Motor neuron (in vitro differentiated cells): ENCODE measurements at regions of chr6 and their contacts with region 1.

Region 1: GRCh38 chr6:7615611-7616383 is 25.8 kb downstream of the SNRNP48 start:
- ATAC-seq: peak in 6 of 8 experiments; percentile 13 to 43 (median 36)
- H3K4me3 ChIP-seq: no peak overlapping the region
- H3K27ac ChIP-seq: no peak overlapping the region
- H3K4me1 ChIP-seq: no peaks in the 10 kb centered on the region

Region 2: GRCh38 chr6:6676910-6677441 is 938.8 kb before region 1 on chr6:
- in situ Hi-C with region 1: loop called in 2 of 9 experiments (anchors 25 kb)
- ATAC-seq: peak; percentile 13 to 65 (median 60)
- H3K4me3 ChIP-seq: no peak overlapping the region
- H3K27ac ChIP-seq: no peak overlapping the region
- H3K4me1 ChIP-seq: peaks cover 24 to 44% of the 10 kb centered on the region in 2 donors

Region 3: GRCh38 chr6:6724539-6725467 is 891.0 kb before region 1 on chr6:
- in situ Hi-C with region 1: loop called in 1 of 9 experiments (anchors 25 kb)
- ATAC-seq: peak; percentile 95 to 99 (median 96)
- H3K4me3 ChIP-seq: no peak overlapping the region
- H3K27ac ChIP-seq: no peak overlapping the region
- H3K4me1 ChIP-seq: peaks cover 17% of the 10 kb centered on the region in 2 donors

Region 4: GRCh38 chr6:7282097-7282906 is 333.5 kb before region 1 on chr6:
- in situ Hi-C with region 1: loop called in 3 of 9 experiments (anchors 10 to 25 kb)
- ATAC-seq: no peak
- H3K4me3 ChIP-seq: no peak overlapping the region
- H3K27ac ChIP-seq: no peak overlapping the region
- H3K4me1 ChIP-seq: no peaks in the 10 kb centered on the region

Region 5: GRCh38 chr6:7424967-7425807 is 190.6 kb before region 1 on chr6:
- in situ Hi-C with region 1: loop called in 1 of 9 experiments (anchors 25 kb)
- ATAC-seq: peak in 5 of 8 experiments; percentile 37 to 75 (median 43)
- H3K4me3 ChIP-seq: no peak overlapping the region
- H3K27ac ChIP-seq: no peak overlapping the region
- H3K4me1 ChIP-seq: no peaks in the 10 kb centered on the region

Region 6: DNA sequence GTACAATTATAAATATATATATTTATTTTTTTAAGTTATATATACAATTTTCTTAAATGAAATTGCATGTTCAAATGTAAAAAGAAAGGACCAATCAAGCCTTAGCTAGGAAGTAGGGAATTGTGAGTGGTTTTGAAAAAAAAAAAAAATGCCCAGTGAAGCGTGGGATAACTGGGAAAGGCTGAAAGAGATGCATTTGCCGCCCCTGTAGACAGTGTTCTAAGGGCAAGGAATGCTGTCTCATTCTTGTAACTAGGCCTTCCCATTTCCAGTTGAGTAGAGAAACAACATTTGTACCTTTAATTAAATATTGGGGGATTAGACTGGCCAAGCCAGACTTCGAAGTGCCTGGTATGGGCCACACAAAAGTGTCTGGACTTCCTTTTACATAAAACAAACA is 1249.7 kb after region 1 on chr6:
- in situ Hi-C with region 1: no loop called
- ATAC-seq: no peak
- H3K4me3 ChIP-seq: no peak overlapping the region
- H3K27ac ChIP-seq: no peak overlapping the region
- H3K4me1 ChIP-seq: no peaks in the 10 kb centered on the region